Naive thymus-derived CD8-positive, alpha-beta T cell (primary cell): ENCODE measurements at regions of chr4 and their contacts with region 1.

Region 1: GRCh38 chr4:82428969-82429727 is 1.1 kb downstream of the HNRNPDL start:
- DNase-seq: peak; percentile 89 to 97 (median 94)
- ATAC-seq: peak; percentile 56 to 63
- H3K4me3 Mint-ChIP-seq: peak overlapping the region; percentile 98 to 100 (median 100)
- H3K27ac Mint-ChIP-seq: peak overlapping the region; percentile 97 to 100 (median 99)
- H3K4me1 Mint-ChIP-seq: peaks cover 24 to 79% (median 71%) of the 10 kb centered on the region in 4 donors
- H3K27me3 Mint-ChIP-seq: peaks cover 0 to 4% (median 0%) of the 10 kb centered on the region in 5 donors

Region 2: GRCh38 chr4:81471588-81472288 is 957.4 kb before region 1 on chr4 and contains the start of gene RASGEF1B:
- POLR2A ChIA-PET with region 1: interaction called, 14 read pairs
- DNase-seq: peak; percentile 89 to 99 (median 96)
- ATAC-seq: peak; percentile 83 to 86
- H3K4me3 Mint-ChIP-seq: peak within 1 kb of the TSS; percentile 88 to 97 (median 95)
- H3K27ac Mint-ChIP-seq: peak within 1 kb of the TSS; percentile 89 to 100 (median 98)
- H3K4me1 Mint-ChIP-seq: peaks cover 34 to 58% (median 43%) of the 10 kb centered on the region in 4 donors
- H3K27me3 Mint-ChIP-seq: no peaks in the 10 kb centered on the region
- polyA plus RNA-seq, gene RASGEF1B: 6.4 to 13.7 (median 8.9) TPM

Region 3: DNA sequence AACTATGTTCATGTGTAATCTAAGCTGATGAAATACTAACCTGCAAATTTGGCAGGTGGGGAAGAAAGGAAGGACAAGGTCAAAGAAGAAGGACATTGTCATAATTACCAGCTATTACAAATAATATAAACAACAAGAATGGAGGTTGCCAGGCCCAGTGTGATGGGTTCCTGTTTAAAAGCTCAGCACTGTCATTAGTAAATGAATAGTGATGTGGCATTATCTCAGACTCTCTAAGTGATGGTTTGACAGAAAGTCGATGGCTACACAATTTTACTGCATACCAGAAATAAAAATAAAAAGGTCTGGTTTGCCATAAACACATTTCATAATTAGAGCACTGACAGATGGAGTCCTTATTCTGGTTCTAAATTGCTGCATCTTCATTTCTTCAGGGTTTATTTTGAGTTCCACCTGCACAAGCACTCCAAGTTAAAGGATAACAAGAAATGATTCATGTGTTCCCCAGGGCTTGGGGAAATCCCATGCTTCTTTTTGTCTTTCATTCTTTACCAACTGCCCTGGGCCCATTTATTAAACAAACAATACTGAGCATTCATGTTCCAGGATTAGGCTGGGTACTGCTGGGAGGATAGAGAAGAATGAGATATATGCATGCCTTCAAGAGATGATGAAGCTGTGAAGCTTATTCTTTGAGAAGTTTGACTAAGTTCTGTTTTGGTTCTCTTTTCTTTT is 589.7 kb before region 1 on chr4:
- POLR2A ChIA-PET with region 1: no interaction called
- DNase-seq: no peak
- ATAC-seq: no peak
- H3K4me3 Mint-ChIP-seq: no peak overlapping the region
- H3K27ac Mint-ChIP-seq: no peak overlapping the region
- H3K4me1 Mint-ChIP-seq: no peaks in the 10 kb centered on the region
- H3K27me3 Mint-ChIP-seq: no peaks in the 10 kb centered on the region

Region 4: DNA sequence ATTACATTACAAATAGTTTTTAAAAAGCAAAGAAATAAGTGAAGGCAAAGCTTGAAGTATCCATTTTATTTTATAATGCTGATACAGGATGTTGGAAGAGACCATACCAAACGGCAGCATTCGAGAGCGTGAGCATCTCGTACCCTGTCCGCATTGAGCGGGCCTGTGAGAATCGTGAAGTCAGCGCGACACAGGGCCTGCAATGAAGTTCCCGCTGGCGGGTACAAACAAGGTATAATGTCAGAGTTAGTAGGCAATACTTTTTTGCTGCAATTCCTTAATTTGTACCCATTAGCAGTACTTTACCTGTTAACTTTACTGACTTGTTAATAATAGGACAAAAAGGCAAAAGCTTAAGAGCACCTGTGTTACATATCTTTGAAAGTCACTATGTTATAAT is 74.4 kb before region 1 on chr4:
- POLR2A ChIA-PET with region 1: interaction called, 28 read pairs
- DNase-seq: no peak
- ATAC-seq: no peak
- H3K4me3 Mint-ChIP-seq: no peak overlapping the region
- H3K27ac Mint-ChIP-seq: peak overlapping the region in 2 of 10 donors; percentile 15 to 22
- H3K4me1 Mint-ChIP-seq: peaks cover 25 to 71% (median 56%) of the 10 kb centered on the region in 4 donors
- H3K27me3 Mint-ChIP-seq: no peaks in the 10 kb centered on the region

Region 5: DNA sequence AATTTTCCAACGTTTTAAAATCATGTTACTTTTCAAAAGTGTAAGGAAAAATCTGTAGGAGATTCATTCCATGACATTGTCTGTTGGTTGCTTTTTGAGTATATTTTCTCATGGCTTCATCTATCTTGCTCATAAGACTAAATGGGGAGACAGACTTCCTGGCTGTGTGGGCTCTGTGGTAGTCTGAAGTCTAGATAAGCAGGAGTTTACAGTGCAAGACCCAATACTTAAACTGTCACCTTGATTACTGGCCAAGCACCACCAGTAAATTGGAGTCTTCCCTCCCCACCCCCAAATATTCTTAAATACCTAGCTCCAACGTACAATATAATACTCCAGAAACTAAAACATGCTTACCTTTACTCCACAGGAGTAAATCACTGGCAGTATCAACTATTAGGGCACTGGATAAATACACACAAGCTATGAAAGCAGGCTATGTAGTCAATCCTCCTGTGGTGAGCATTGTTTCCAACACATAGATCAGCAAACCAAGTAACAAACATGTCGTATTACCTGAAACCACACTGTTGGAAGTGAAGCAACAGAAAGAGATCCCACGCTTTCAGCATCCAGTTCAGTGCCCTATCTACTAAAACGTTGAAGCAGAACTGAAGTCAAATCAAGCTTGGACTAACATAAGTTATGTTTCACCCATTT is 61.6 kb before region 1 on chr4:
- POLR2A ChIA-PET with region 1: interaction called, 193 read pairs
- DNase-seq: no peak
- ATAC-seq: peak; percentile 43 to 44
- H3K4me3 Mint-ChIP-seq: peak overlapping the region in 9 of 10 donors; percentile 34 to 99 (median 67)
- H3K27ac Mint-ChIP-seq: peak overlapping the region; percentile 26 to 98 (median 62)
- H3K4me1 Mint-ChIP-seq: peaks cover 24 to 91% (median 85%) of the 10 kb centered on the region in 4 donors
- H3K27me3 Mint-ChIP-seq: no peaks in the 10 kb centered on the region

Region 6: GRCh38 chr4:82379964-82380733 is 49.0 kb before region 1 on chr4:
- POLR2A ChIA-PET with region 1: interaction called, 193 read pairs
- DNase-seq: no peak
- ATAC-seq: no peak
- H3K4me3 Mint-ChIP-seq: no peak overlapping the region
- H3K27ac Mint-ChIP-seq: peak overlapping the region in 2 of 10 donors; percentile 14 to 38
- H3K4me1 Mint-ChIP-seq: peaks cover 8 to 32% (median 22%) of the 10 kb centered on the region in 4 donors
- H3K27me3 Mint-ChIP-seq: no peaks in the 10 kb centered on the region

Region 7: DNA sequence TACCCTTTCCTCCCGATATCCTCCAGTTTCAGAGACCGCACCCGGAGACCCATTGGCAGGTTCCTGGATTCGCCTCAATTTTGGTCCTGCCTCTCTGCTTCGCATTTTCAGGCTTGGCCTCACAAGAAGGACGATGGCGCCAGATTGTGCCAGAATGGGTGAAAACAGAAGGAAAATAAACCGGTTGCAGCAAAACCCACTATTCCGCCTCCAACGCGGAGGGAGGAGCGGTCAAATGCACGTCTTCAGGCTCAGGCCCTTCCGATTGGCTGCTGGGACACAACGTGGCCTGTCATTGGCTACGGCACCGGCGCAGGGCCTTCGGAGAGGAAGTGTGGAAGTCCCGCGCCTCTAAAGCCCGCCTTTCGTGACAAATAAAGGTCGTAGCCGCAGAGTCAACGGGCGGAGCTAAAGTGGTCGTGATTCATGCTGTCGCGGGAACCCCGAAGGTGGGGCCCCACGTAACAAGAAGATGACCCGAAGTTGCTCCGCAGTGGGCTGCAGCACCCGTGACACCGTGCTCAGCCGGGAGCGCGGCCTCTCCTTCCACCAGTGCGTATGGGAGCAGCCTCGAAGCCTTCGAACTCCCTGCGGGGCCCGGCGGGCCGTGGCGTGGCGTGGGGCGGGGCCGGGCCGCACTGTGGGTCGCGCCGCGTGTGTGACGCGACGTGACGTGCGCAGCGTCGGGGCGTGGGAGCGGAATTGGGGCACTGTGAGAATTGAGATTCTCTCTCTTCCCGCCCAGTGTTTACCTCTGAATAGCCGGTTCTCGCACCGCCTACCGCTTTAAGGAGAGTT is 471.4 kb after region 1 on chr4 and contains the start of gene THAP9:
- POLR2A ChIA-PET with region 1: interaction called, 14 read pairs
- DNase-seq: peak; percentile 90 to 100 (median 98)
- ATAC-seq: peak; percentile 88 to 90
- H3K4me3 Mint-ChIP-seq: no peak within 1 kb of the TSS
- H3K27ac Mint-ChIP-seq: no peak within 1 kb of the TSS
- H3K4me1 Mint-ChIP-seq: peaks cover 12 to 30% (median 18%) of the 10 kb centered on the region in 4 donors
- H3K27me3 Mint-ChIP-seq: no peaks in the 10 kb centered on the region
- polyA plus RNA-seq, gene THAP9: 1.6 to 2.9 (median 1.7) TPM

Region 8: GRCh38 chr4:83455281-83456129 is 1026.4 kb after region 1 on chr4 and contains the starts of genes HELQ and MRPS18C:
- POLR2A ChIA-PET with region 1: interaction called, 11 read pairs
- DNase-seq: peak; percentile 80 to 99 (median 96)
- ATAC-seq: peak; percentile 86 to 89
- H3K4me3 Mint-ChIP-seq: peak within 1 kb of the TSS; percentile 98 to 100 (median 100)
- H3K27ac Mint-ChIP-seq: peak within 1 kb of the TSS; percentile 100
- H3K4me1 Mint-ChIP-seq: peaks cover 16 to 59% (median 58%) of the 10 kb centered on the region in 4 donors
- H3K27me3 Mint-ChIP-seq: no peaks in the 10 kb centered on the region
- polyA plus RNA-seq, gene HELQ: 16.7 to 27.5 (median 19.9) TPM
- polyA plus RNA-seq, gene MRPS18C: 45.4 to 64.6 (median 50.5) TPM